Panc1 (cell line): ENCODE measurements at regions of chr15 and their contacts with region 1.

Region 1: DNA sequence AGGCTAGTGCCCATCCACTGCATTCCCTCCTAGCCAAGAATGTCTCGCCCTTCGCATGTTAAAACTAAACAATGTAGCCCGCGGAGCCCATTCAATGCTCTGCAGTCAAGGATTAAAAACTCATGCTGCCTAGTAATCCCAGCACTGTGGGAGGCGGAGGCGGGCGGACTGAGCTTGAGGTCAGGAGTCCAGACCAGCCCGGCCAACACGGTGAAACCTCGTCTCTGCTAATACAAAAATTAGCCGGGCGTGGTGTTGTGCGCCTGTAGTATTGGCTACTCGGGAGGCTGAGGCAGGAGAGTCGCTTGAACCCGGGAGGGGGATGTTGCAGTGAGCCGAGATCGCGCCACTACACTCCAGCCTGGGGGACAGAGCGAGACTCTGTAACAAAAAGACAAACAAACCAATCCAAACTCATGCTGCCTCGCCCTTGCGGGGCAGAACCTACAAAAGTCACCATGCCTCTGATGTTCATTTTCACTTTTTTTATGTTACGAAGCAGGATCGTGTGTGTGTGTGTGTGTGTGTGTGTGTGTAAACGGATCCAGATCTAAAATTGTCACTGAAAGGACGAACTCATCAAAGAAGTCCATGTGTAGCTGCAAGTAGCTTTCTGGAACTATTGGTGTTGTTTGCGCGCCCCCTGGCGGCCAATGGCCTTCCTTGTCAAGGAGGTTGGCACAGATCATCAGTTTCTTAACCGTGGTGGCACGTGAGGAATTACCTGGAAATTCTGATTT is 54.8 kb upstream of the SPESP1 start:
- DNase-seq: peak; percentile 75
- ATAC-seq: peak; percentile 97
- H3K4me3 ChIP-seq: peak overlapping the region; percentile 16 to 52
- H3K27ac ChIP-seq: no peak overlapping the region
- H3K4me1 ChIP-seq: no peaks in the 10 kb centered on the region
- H3K27me3 ChIP-seq: peaks cover 2% of the 10 kb centered on the region; the same call in 1 of the 2 replicates
- CTCF ChIP-seq: peak; percentile 90

Region 2: DNA sequence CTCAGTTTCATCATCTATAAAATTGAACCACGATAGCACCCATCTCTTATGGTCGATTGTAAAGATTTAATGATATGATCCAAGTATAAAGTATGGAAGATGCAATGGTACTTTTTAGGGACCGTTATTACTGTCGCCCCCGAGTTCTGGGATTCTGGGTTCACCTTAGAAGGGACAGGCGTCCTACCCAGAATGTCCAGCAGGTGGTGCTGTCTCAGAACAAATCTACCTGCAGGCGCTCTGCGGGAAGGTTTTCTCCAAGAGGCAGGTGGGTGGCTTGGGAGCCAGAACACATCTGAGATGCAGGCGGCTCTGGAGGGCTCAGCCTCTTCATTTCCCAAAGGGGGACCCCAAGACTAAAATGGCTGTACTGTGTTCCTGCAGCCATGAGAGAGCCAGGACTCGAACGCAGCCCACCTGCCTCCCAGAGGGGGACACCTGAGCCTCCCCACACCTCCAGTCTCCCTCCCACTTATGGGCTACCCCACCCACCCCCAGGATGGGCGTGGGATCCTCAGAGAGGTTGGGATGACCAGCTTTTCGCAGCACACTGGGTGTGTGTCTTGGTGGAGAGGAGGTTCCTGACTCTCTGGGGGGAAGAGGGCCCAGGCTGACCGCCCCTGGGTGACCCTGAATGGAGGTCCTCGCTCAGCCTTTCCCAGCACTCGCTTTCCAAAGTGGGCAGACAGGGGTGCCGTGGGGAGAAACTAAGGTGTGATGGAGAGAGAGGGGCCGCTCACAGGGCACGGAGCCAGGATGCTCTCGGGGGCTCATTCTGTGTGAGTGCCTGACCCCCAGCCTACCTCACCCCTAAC is 324.9 kb before region 1 on chr15:
- CTCF ChIA-PET with region 1: interaction called, 6 read pairs
- POLR2A ChIA-PET with region 1: no interaction called
- in situ Hi-C with region 1: no loop called
- intact Hi-C with region 1: loop called (anchors 2 kb)
- DNase-seq: peak; percentile 38
- ATAC-seq: peak; percentile 59; the same call in 1 of the 2 replicates
- H3K4me3 ChIP-seq: no peak overlapping the region
- H3K27ac ChIP-seq: no peak overlapping the region
- H3K4me1 ChIP-seq: no peaks in the 10 kb centered on the region; the same call in 1 of the 2 replicates
- H3K27me3 ChIP-seq: no peaks in the 10 kb centered on the region
- CTCF ChIP-seq: peak; percentile 94

Region 3: GRCh38 chr15:68730471-68730919 is 145.1 kb before region 1 on chr15:
- CTCF ChIA-PET with region 1: interaction called, 3 read pairs
- POLR2A ChIA-PET with region 1: no interaction called
- in situ Hi-C with region 1: no loop called
- intact Hi-C with region 1: loop called (anchors 2 kb)
- DNase-seq: no peak
- ATAC-seq: peak; percentile 70; the same call in 1 of the 2 replicates
- H3K4me3 ChIP-seq: no peak overlapping the region
- H3K27ac ChIP-seq: no peak overlapping the region
- H3K4me1 ChIP-seq: no peaks in the 10 kb centered on the region
- H3K27me3 ChIP-seq: no peaks in the 10 kb centered on the region; the same call in 1 of the 2 replicates
- CTCF ChIP-seq: peak; percentile 72

Region 4: GRCh38 chr15:68783226-68784058 is 92.1 kb before region 1 on chr15:
- CTCF ChIA-PET with region 1: interaction called, 7 read pairs
- POLR2A ChIA-PET with region 1: no interaction called
- in situ Hi-C with region 1: no loop called
- intact Hi-C with region 1: loop called (anchors 5 kb)
- DNase-seq: peak; percentile 8
- ATAC-seq: peak; percentile 78
- H3K4me3 ChIP-seq: no peak overlapping the region
- H3K27ac ChIP-seq: no peak overlapping the region
- H3K4me1 ChIP-seq: peaks cover 7% of the 10 kb centered on the region
- H3K27me3 ChIP-seq: no peaks in the 10 kb centered on the region
- CTCF ChIP-seq: peak; percentile 80; the same call in 1 of the 2 replicates

Region 5: GRCh38 chr15:68862415-68862814 is 13.1 kb before region 1 on chr15:
- CTCF ChIA-PET with region 1: no interaction called
- POLR2A ChIA-PET with region 1: no interaction called
- in situ Hi-C with region 1: no loop called
- intact Hi-C with region 1: no loop called
- DNase-seq: no peak
- ATAC-seq: no peak
- H3K4me3 ChIP-seq: no peak overlapping the region
- H3K27ac ChIP-seq: no peak overlapping the region
- H3K4me1 ChIP-seq: no peaks in the 10 kb centered on the region
- H3K27me3 ChIP-seq: no peaks in the 10 kb centered on the region
- CTCF ChIP-seq: no peak

Region 6: DNA sequence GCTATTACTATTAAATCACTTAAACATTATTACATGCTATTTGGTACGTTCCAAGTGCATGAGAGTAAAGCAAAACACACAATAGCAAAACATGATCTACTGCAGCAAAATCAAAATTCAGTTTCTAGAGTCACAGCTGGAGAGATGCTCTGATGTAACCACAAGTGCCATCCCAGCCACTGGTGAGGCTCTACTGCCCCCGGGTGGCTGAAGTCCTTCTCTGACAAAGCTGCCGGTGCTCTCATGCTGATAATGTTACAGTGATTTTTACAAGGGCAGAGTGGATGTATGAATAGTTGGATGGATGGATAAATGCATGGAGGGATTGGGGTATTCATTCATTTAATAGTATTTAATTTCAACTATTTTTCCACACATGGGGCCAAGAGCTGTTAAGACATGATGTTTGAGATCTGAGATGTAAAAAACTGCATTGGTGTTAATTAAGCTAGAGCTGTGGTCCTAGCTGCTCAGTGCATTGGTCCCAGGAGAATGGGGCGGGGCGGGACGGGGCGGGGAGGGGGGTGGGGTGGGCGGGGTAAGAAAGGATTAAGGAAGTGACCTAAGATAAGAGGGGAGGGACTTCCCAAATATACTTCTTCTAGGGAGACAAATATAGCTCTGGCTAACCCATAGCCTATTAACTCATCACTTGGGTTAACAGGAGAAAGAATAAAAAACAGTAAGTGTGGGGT is 49.5 kb after region 1 on chr15:
- CTCF ChIA-PET with region 1: interaction called, 13 read pairs
- POLR2A ChIA-PET with region 1: no interaction called
- in situ Hi-C with region 1: no loop called
- intact Hi-C with region 1: no loop called
- DNase-seq: peak; percentile 30
- ATAC-seq: peak; percentile 98
- H3K4me3 ChIP-seq: no peak overlapping the region
- H3K27ac ChIP-seq: no peak overlapping the region
- H3K4me1 ChIP-seq: no peaks in the 10 kb centered on the region
- H3K27me3 ChIP-seq: peaks cover 10% of the 10 kb centered on the region
- CTCF ChIP-seq: peak; percentile 90